ENCODE measurements at regions of chr19 and their contacts with region 1.

Region 1: DNA sequence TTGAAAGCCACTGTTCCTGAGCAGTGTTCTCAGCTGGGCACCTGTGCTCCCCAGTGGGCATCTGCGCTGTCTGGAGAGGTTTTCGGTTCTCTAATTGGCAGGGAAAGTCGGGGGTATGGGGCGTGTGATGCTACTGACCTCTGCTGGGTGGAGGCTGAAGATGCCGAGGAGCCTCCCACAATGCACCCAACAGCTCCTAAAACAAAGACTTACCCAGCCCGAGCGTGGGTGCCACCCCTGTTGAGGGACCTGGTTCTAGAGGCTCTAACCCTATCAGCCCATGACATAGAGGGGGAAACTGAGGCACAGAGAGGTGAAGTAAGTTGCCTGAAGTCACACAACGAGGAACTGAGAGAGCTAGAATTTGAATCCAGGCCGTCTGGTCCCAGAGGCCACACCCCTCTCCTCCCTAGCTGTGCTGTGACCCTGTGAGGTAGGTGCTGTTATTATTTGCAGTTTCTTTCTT is 2.3 kb downstream of the SPACA4 start:
- DNase-seq: peak; percentile 87
- ATAC-seq: peak; percentile 97
- H3K4me3 ChIP-seq: peak overlapping the region in 1 of 5 experiments; percentile 25
- H3K4me3 Mint-ChIP-seq: peak overlapping the region; percentile 67
- H3K27ac ChIP-seq: peak overlapping the region in 1 of 2 donors; percentile 4
- H3K27ac Mint-ChIP-seq: peak overlapping the region; percentile 90
- H3K4me1 ChIP-seq: peaks cover 0 to 8% of the 10 kb centered on the region in 2 donors
- H3K4me1 Mint-ChIP-seq: peaks cover 6% of the 10 kb centered on the region
- H3K27me3 ChIP-seq: no peaks in the 10 kb centered on the region
- H3K27me3 Mint-ChIP-seq: no peaks in the 10 kb centered on the region
- CTCF ChIP-seq: peak; percentile 69

Region 2: DNA sequence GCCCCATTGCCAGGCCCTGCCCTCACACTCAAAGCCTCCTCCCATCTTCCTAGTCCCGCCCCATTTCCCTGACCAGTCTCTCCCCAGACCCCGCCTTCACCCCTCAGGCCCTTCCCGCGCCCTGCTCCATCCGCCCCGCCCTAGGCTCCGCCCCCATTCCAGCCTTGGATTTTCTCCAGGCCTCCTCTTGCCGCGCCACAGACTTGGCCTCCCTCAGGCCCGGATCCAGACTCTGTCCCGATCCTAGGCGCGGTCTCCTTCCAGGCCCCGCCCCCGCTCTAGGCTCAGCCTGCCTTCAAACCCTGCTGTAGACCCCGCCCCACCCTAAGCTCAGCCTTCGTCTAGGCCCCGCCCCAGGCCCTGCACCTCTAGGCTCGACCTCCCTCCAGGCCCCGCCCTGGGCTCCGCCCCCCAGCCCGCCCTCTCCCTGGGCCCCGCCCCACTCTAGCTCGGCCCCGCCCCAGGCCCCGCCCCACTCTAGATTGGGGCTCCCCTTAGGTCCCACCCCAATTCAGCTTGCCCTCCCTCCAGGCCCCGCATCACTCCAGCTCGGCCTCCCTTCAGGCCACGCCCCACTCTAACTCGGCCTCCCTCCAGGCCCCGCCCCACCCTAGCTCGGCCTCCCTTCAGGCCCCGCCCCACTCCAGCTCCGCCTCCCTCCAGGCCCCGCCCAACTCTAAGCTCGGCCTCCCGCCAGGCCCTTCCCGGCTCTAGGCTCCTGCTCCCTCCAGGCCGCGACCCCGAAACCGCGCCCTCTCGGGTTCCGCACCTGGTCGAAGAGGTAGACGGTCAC is 115.7 kb before region 1 on chr19:
- CTCF ChIA-PET with region 1: interaction called, 51 read pairs
- POLR2A ChIA-PET with region 1: interaction called, 7 read pairs
- intact Hi-C with region 1: loop called (anchors 1 kb)
- DNase-seq: peak; percentile 82
- ATAC-seq: peak; percentile 69
- H3K4me3 ChIP-seq: peak overlapping the region in 4 of 5 experiments; percentile 22 to 56 (median 48)
- H3K4me3 Mint-ChIP-seq: peak overlapping the region; percentile 69
- H3K27ac ChIP-seq: no peak overlapping the region
- H3K27ac Mint-ChIP-seq: no peak overlapping the region
- H3K4me1 ChIP-seq: peaks cover 51 to 53% of the 10 kb centered on the region in 2 donors
- H3K4me1 Mint-ChIP-seq: peaks cover 35% of the 10 kb centered on the region
- H3K27me3 ChIP-seq: peaks cover 0 to 57% (median 28%) of the 10 kb centered on the region in 4 experiments
- H3K27me3 Mint-ChIP-seq: peaks cover 35% of the 10 kb centered on the region
- CTCF ChIP-seq: no peak

Region 3: GRCh38 chr19:48548253-48548911 is 60.4 kb before region 1 on chr19:
- CTCF ChIA-PET with region 1: no interaction called
- POLR2A ChIA-PET with region 1: no interaction called
- intact Hi-C with region 1: no loop called
- DNase-seq: no peak
- ATAC-seq: no peak
- H3K4me3 ChIP-seq: no peak overlapping the region
- H3K4me3 Mint-ChIP-seq: no peak overlapping the region
- H3K27ac ChIP-seq: no peak overlapping the region
- H3K27ac Mint-ChIP-seq: no peak overlapping the region
- H3K4me1 ChIP-seq: no peaks in the 10 kb centered on the region
- H3K4me1 Mint-ChIP-seq: no peaks in the 10 kb centered on the region
- H3K27me3 ChIP-seq: peaks cover 0 to 3% (median 1%) of the 10 kb centered on the region in 4 experiments
- H3K27me3 Mint-ChIP-seq: peaks cover 5% of the 10 kb centered on the region
- CTCF ChIP-seq: no peak

Region 4: DNA sequence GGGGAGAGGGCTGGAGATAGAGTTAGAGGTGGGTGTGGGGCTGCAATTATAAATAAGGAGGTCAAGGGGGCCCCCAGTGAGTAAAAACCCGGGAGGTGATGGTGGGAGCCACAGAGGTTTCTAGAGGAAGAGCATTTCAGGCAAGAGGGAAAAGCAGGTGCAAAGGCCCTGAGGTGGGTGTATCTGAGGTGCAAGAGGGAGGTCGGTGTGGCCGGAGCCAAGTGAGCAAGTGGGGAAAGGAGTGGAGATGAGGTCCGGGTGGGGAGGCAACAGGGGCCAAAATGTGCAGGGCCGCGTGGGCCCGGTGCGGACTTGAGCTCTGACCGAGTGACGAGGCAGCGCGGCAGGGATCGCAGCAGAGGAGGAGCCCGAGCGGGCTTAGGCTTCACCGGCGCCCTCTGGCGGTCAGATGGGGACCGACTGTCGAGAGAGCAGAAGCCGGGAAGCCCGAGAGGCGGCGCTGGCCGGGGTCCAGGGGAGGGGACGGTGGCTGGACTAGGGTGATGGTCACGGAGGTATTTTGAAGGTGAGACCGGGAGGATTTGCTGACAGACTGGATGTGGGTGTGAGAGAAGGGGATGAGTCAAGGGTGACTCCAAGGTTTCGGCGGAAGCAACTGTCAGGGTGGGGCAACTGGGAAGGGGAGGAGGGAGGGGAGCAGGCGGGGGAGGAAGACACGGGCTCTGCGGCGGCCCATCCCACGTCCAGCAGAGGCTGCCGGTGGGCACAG is 20.0 kb before region 1 on chr19:
- CTCF ChIA-PET with region 1: interaction called, 40 read pairs
- POLR2A ChIA-PET with region 1: interaction called, 3 read pairs
- intact Hi-C with region 1: loop called (anchors 1 kb)
- DNase-seq: peak; percentile 89
- ATAC-seq: peak; percentile 91
- H3K4me3 ChIP-seq: peak overlapping the region in 4 of 5 experiments; percentile 14 to 56 (median 48)
- H3K4me3 Mint-ChIP-seq: peak overlapping the region; percentile 82
- H3K27ac ChIP-seq: no peak overlapping the region
- H3K27ac Mint-ChIP-seq: no peak overlapping the region
- H3K4me1 ChIP-seq: peaks cover 4 to 15% of the 10 kb centered on the region in 2 donors
- H3K4me1 Mint-ChIP-seq: peaks cover 12% of the 10 kb centered on the region
- H3K27me3 ChIP-seq: peaks cover 0 to 7% (median 4%) of the 10 kb centered on the region in 4 experiments
- H3K27me3 Mint-ChIP-seq: peaks cover 14% of the 10 kb centered on the region
- CTCF ChIP-seq: peak; percentile 94

Region 5: GRCh38 chr19:48618916-48619691 is 10.3 kb after region 1 on chr19 and contains the starts of genes RPL18 and SPHK2:
- CTCF ChIA-PET with region 1: interaction called, 25 read pairs
- POLR2A ChIA-PET with region 1: interaction called, 17 read pairs
- intact Hi-C with region 1: loop called (anchors 1 kb)
- DNase-seq: peak; percentile 99
- ATAC-seq: peak; percentile 82
- H3K4me3 ChIP-seq: peak within 1 kb of the TSS; percentile 95 to 100 (median 99)
- H3K4me3 Mint-ChIP-seq: peak within 1 kb of the TSS; percentile 98
- H3K27ac ChIP-seq: peak within 1 kb of the TSS; percentile 87 to 91
- H3K27ac Mint-ChIP-seq: peak within 1 kb of the TSS; percentile 98
- H3K4me1 ChIP-seq: peaks cover 25 to 45% of the 10 kb centered on the region in 2 donors
- H3K4me1 Mint-ChIP-seq: peaks cover 51% of the 10 kb centered on the region
- H3K27me3 ChIP-seq: no peaks in the 10 kb centered on the region
- H3K27me3 Mint-ChIP-seq: no peaks in the 10 kb centered on the region
- CTCF ChIP-seq: no peak
- total RNA-seq, gene RPL18: 2,217 and 2,248 TPM in 2 replicates
- total RNA-seq, gene SPHK2: 45.4 and 47.3 TPM in 2 replicates

Region 6: DNA sequence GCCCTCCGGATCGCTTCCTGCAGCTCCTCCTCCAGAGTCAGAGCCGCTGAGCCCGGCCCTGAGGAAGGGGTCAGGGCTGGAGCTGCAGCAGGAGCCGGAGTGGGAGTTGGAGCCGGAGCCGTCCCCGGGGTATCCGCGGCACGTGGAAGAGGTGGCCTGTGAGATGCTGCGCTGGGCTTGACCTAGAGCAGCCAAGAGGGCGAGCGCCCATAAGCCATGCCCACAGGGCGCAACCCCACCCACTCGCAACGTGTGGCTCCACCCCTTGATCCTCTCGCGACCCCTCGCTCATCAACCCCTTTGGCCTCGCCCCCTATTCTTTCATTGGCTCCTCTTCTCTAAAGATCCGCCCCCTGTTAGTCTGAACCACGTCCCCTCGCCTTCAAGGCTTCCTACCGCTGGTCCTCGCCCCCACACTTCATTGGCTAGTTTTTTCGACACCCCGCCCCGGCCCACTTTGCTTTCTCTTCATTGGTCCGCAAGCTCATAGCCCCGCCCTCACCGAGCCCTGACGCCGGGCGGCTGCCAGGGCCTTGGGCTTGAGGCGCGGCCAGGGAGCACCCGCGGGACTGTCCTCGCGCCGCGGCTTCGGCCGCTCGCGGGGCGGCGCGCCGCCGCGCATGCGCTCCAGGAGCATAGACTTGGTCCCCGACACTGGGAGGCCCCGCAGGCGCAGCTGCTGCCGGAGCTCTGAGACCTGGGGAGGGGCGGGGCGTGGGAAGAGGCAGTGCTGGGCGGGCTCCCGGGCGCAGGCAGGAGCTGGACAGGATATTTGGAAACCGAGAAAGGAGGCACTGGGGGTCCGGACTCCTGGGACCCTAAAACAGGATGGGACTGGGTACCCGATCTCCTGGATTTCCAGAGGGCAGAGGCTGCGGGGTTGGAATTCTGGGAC is 105.3 kb after region 1 on chr19:
- CTCF ChIA-PET with region 1: no interaction called
- POLR2A ChIA-PET with region 1: no interaction called
- intact Hi-C with region 1: no loop called
- DNase-seq: peak; percentile 99
- ATAC-seq: peak; percentile 90
- H3K4me3 ChIP-seq: peak overlapping the region; percentile 39 to 86 (median 74)
- H3K4me3 Mint-ChIP-seq: peak overlapping the region; percentile 89
- H3K27ac ChIP-seq: peak overlapping the region; percentile 67 to 76
- H3K27ac Mint-ChIP-seq: peak overlapping the region; percentile 82
- H3K4me1 ChIP-seq: peaks cover 14 to 22% of the 10 kb centered on the region in 2 donors
- H3K4me1 Mint-ChIP-seq: peaks cover 21% of the 10 kb centered on the region
- H3K27me3 ChIP-seq: no peaks in the 10 kb centered on the region
- H3K27me3 Mint-ChIP-seq: no peaks in the 10 kb centered on the region
- CTCF ChIP-seq: no peak

Region 7: DNA sequence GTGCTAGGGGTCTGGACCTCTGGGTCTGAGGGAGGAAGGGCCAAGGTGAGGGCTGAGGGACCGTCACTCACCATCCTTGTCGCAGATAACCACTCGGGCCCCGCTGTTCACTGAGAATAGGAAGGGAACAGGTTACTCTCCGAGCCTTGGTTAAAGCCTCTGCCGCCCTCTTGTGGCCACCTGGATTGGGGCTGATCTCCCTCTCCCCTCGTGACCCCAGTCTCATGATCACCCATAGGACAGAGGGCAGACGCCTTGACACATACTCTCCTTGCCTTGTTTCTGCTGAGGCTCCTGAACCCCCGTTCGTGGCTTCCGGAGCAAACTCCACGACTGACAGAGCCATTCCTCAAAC is 226.9 kb after region 1 on chr19:
- CTCF ChIA-PET with region 1: no interaction called
- POLR2A ChIA-PET with region 1: interaction called, 12 read pairs
- intact Hi-C with region 1: no loop called
- DNase-seq: peak; percentile 96
- ATAC-seq: peak; percentile 87
- H3K4me3 ChIP-seq: peak overlapping the region in 4 of 5 experiments; percentile 25 to 59 (median 54)
- H3K4me3 Mint-ChIP-seq: peak overlapping the region; percentile 98
- H3K27ac ChIP-seq: peak overlapping the region in 1 of 2 donors; percentile 56
- H3K27ac Mint-ChIP-seq: peak overlapping the region; percentile 93
- H3K4me1 ChIP-seq: peaks cover 16 to 25% of the 10 kb centered on the region in 2 donors
- H3K4me1 Mint-ChIP-seq: peaks cover 25% of the 10 kb centered on the region
- H3K27me3 ChIP-seq: peaks cover 0 to 13% (median 1%) of the 10 kb centered on the region in 4 experiments
- H3K27me3 Mint-ChIP-seq: no peaks in the 10 kb centered on the region
- CTCF ChIP-seq: peak; percentile 82